Heart right ventricle (tissue), 16 donors: ENCODE measurements at regions of chr1 and their contacts with region 1.

Region 1: DNA sequence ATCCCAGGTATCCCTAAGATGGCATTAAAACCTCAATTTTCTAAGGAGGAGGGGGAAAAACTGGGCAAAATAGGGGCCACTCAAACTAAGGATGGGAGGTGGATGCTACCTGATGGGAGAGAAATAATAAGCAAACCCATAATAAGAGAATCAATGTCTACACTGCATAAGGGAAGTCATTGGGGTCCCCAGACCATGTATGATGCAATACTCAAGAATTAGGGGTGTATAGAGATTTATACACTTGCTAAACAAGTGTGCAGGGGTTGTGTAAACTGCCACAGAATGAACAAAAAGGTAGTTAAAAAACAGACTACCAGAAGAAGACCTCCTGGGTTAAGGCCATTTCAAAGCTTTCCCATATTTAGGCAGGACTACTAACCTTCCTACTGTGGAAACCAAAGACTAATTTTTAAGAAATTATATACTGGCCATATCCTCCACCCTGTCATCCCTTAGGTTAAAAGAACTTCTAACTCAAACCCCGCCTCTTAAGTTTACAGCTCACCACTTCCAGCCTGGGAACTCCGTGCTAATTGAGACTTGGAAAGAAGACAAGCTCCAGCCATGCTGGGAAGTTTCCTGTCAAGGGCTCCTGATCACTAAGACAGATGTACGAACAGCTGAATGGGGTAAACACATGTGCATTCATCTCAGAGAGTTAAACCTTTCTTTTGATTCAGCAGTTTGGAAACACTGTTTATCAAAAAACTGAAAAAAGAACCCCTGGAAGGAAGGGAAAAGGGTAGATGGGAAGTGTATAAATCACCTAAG is 64.4 kb upstream of the TLR5 start:
- DNase-seq: peak in 1 of 2 donors; percentile 44
- ATAC-seq: peak in 6 of 8 donors; percentile 74 to 94 (median 84)
- H3K4me3 ChIP-seq: no peak overlapping the region
- H3K27ac ChIP-seq: peak overlapping the region in 6 of 10 donors; percentile 2 to 81 (median 42)
- H3K4me1 ChIP-seq: peaks cover 0 to 30% (median 11%) of the 10 kb centered on the region in 9 donors
- H3K27me3 ChIP-seq: no peaks in the 10 kb centered on the region
- CTCF ChIP-seq: no peak

Region 2: DNA sequence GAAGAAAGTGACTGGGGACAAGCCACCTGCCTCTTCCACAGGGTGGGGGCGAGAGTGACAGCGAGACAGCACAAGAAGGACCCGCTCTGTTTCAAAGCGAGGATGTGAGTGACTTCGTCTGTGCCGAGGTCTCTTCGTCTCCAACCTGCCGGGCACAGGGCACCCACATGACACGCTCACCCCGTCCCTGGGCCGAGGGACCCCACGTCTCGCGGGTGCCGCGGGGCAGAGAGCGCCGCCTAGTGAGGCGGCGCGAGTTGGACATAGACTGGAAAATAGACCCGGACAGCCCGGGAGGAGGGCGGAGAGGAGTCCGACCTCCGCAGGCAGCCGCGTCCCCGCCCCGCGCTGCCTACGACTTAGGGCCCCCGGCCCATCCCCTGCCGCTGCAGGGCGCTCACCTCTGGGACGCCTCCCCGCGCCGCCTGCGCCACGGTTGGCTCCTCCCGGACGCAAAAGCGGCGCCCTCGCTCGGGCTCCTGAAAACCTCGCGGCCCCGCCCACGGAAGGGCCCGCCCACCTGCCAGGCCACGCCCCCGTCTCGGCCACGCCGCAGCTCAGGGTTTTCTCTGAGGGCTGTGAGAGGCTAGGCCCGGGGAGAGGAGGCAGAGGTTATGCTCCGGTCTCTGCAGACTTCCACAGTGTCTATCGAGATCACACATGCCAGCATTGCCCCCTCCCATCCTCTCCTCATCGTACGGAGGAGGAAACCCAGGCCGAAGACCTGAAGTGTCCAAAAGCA is 64.5 kb before region 1 on chr1 and contains the start of gene TLR5:
- intact Hi-C with region 1: loop called in 1 of 10 experiments (anchors 5 kb)
- DNase-seq: peak; percentile 84 to 91
- ATAC-seq: peak; percentile 91 to 96 (median 94)
- H3K4me3 ChIP-seq: peak within 1 kb of the TSS; percentile 39 to 75 (median 70)
- H3K27ac ChIP-seq: peak within 1 kb of the TSS in 9 of 10 donors; percentile 5 to 81 (median 45)
- H3K4me1 ChIP-seq: peaks cover 0 to 48% (median 21%) of the 10 kb centered on the region in 9 donors
- H3K27me3 ChIP-seq: no peaks in the 10 kb centered on the region
- CTCF ChIP-seq: peak; percentile 21 to 83 (median 66)
- total RNA-seq, gene TLR5: 0.91 to 5.0 (median 1.5) TPM

Region 3: DNA sequence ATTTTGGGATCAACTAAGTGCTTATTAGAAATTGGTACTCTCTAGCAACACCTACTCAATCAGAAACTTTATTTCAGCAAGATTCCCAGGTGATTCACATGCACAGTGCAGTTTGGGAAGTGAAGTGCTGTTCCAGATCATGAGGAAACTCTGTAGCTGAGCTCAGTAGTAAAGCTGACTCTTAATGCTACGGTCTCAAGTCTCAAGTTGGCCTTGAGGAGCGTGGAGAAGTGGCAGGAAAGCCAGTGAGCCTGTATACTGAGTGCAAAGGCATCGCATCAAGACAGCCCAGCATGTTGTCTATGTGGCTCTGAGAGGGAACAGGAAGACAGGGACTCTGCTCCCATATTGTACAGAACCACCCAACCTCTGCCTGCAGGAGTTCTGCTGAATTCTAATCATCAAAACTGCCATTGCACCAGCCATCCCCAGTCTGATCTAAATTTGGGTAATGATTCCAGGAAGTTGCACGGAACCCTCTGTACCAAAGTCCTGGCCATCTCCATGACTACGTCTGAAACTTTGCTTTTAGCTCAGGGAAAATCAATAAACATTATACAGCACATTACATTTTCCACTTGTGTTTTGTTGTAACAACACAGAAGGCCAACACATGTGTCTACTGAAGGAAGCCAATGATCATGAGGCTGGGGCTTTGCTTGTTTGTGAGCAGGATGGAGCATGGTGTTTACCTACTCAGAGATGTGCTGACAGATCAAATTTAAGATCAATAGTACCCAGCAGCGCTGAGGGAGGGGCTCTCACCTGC is 40.7 kb after region 1 on chr1:
- intact Hi-C with region 1: no loop called
- DNase-seq: no peak
- ATAC-seq: peak in 1 of 8 donors; percentile 35
- H3K4me3 ChIP-seq: no peak overlapping the region
- H3K27ac ChIP-seq: no peak overlapping the region
- H3K4me1 ChIP-seq: no peaks in the 10 kb centered on the region
- H3K27me3 ChIP-seq: no peaks in the 10 kb centered on the region
- CTCF ChIP-seq: no peak

Region 4: DNA sequence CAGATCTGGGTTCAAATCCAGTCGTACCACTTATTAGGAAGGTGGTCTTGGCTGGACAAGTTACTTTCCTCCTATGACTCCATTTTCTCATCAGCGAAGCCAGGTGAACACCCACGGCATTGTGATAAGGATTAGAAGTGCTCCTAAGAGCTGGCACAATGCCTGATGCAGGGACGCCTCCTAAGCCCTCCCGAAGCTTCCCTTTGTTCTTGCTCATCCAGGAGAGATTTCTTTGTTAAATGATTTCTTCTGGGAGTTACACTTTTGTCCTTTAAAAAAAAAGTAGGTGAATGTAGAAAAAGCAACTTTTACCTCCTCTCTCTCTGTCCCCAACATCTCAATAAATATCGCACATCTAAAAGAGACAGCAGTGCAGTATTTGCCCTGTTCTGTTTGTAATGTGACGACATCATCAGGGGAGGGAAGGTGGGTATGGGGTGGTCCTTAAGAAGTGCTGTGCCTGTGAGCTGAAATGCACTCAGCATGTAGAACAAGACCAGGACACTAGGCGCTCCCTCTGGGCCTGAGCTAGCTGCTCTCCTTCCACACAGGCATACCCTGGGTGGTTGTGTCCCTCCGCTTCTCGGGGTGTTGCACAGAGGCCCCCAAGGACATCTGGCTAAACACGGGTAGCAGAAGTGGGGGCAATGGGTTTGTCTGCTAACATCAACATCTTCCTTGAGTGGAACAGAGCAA is 112.6 kb after region 1 on chr1:
- intact Hi-C with region 1: no loop called
- DNase-seq: no peak
- ATAC-seq: no peak
- H3K4me3 ChIP-seq: no peak overlapping the region
- H3K27ac ChIP-seq: no peak overlapping the region
- H3K4me1 ChIP-seq: no peaks in the 10 kb centered on the region
- H3K27me3 ChIP-seq: peaks cover 0 to 4% (median 0%) of the 10 kb centered on the region in 7 donors
- CTCF ChIP-seq: no peak